Cardiac septum (tissue), 1 donor: ENCODE measurements at regions of chrX and their contacts with region 1.

Region 1: GRCh38 chrX:147476008-147476407 is 435.7 kb upstream of the FMR1 start:
- DNase-seq: no peak

Region 2: DNA sequence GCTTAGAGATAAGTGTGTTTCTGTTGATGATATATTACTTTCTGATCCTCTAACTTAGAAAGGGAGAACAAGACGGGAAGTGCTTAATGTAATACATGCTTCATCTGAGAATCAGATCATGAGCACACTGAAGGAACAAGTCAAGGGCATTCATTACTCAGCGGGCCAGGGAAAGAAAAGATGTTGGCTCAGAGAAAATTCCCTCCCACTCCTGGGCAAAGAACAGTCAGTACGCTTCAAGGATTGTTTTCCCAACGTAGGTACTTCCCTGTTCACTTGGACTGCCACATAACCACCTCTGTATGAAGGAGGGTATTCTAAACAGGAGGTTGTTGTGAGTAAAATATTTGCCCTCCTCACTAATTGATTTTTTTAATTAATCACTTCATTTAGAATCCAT is 61.2 kb after region 1 on chrX:
- intact Hi-C with region 1: loop called (anchors 2 kb)
- DNase-seq: no peak

Region 3: GRCh38 chrX:147602176-147602696 is 126.2 kb after region 1 on chrX:
- intact Hi-C with region 1: no loop called
- DNase-seq: no peak